ENCODE measurements at regions of chr11 and their contacts with region 1.

Region 1: GRCh38 chr11:45771566-45772448 is 33.1 kb upstream of the SLC35C1 start:
- DNase-seq: peak; percentile 84 to 92
- H3K4me3 ChIP-seq: peak overlapping the region; percentile 38
- H3K4me3 Mint-ChIP-seq: peak overlapping the region; percentile 97
- H3K27ac Mint-ChIP-seq: no peak overlapping the region
- H3K4me1 ChIP-seq: no peaks in the 10 kb centered on the region; the same call in 1 of the 2 replicates
- H3K4me1 Mint-ChIP-seq: peaks cover 12% of the 10 kb centered on the region
- H3K27me3 ChIP-seq: no peaks in the 10 kb centered on the region
- H3K27me3 Mint-ChIP-seq: peaks cover 25% of the 10 kb centered on the region
- CTCF ChIP-seq: peak; percentile 93

Region 2: GRCh38 chr11:45354976-45355705 is 416.7 kb before region 1 on chr11:
- CTCF ChIA-PET with region 1: interaction called, 12 read pairs
- POLR2A ChIA-PET with region 1: no interaction called
- intact Hi-C with region 1: no loop called
- DNase-seq: no peak
- H3K4me3 ChIP-seq: no peak overlapping the region
- H3K4me3 Mint-ChIP-seq: no peak overlapping the region
- H3K27ac Mint-ChIP-seq: no peak overlapping the region
- H3K4me1 ChIP-seq: no peaks in the 10 kb centered on the region
- H3K4me1 Mint-ChIP-seq: no peaks in the 10 kb centered on the region
- H3K27me3 ChIP-seq: no peaks in the 10 kb centered on the region; the same call in 1 of the 2 replicates
- H3K27me3 Mint-ChIP-seq: peaks cover 26% of the 10 kb centered on the region
- CTCF ChIP-seq: no peak

Region 3: GRCh38 chr11:45501392-45502225 is 270.2 kb before region 1 on chr11:
- CTCF ChIA-PET with region 1: no interaction called
- POLR2A ChIA-PET with region 1: no interaction called
- intact Hi-C with region 1: loop called (anchors 2 kb)
- DNase-seq: no peak
- H3K4me3 ChIP-seq: no peak overlapping the region
- H3K4me3 Mint-ChIP-seq: no peak overlapping the region
- H3K27ac Mint-ChIP-seq: no peak overlapping the region
- H3K4me1 ChIP-seq: no peaks in the 10 kb centered on the region
- H3K4me1 Mint-ChIP-seq: no peaks in the 10 kb centered on the region
- H3K27me3 ChIP-seq: no peaks in the 10 kb centered on the region; the same call in 1 of the 2 replicates
- H3K27me3 Mint-ChIP-seq: peaks cover 15% of the 10 kb centered on the region
- CTCF ChIP-seq: no peak

Region 4: DNA sequence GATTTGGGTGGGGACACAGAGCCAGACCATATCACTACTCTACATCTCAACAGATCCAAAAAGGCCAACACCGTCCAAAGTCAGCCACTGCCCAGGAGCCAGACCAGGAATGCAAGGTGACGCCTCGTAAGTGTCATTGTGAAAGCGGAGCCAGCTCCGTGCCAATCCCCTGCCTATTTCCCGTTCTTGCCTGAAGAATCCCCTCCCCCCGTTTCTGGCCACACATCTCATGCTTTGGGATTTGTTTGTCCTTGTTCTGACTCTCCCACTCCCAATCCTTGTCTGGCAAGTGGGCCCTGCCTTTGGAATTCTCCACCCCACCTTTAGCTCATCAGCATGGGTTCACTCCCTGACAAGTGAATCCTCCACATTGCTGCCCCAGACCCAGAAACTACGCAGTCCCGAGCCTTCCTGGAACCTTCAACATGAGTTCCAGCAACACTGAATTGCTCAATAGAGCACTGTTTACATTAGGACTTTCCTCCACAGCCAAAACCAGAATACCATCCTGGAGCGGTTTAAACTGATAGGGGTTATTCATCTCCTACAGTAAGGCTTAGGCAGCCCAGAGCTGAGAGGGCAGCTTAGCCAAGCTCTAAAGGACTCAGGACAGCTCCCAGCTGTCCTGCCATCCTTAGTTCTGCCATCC is 27.1 kb after region 1 on chr11:
- CTCF ChIA-PET with region 1: interaction called, 10 read pairs
- POLR2A ChIA-PET with region 1: no interaction called
- intact Hi-C with region 1: no loop called
- DNase-seq: peak in 1 of 2 experiments; percentile 30
- H3K4me3 ChIP-seq: no peak overlapping the region
- H3K4me3 Mint-ChIP-seq: no peak overlapping the region
- H3K27ac Mint-ChIP-seq: no peak overlapping the region
- H3K4me1 ChIP-seq: 0 out of 2 replicates have a peak, but pooled peaks cover 4% of the 10 kb centered on the region
- H3K4me1 Mint-ChIP-seq: no peaks in the 10 kb centered on the region
- H3K27me3 ChIP-seq: no peaks in the 10 kb centered on the region
- H3K27me3 Mint-ChIP-seq: no peaks in the 10 kb centered on the region
- CTCF ChIP-seq: no peak

Region 5: GRCh38 chr11:45846974-45847910 is 75.4 kb after region 1 on chr11 and contains the start of gene CRY2:
- CTCF ChIA-PET with region 1: interaction called, 10 read pairs
- POLR2A ChIA-PET with region 1: no interaction called
- intact Hi-C with region 1: loop called (anchors 5 kb)
- DNase-seq: peak; percentile 100
- H3K4me3 ChIP-seq: peak within 1 kb of the TSS; percentile 80
- H3K4me3 Mint-ChIP-seq: peak within 1 kb of the TSS; percentile 81
- H3K27ac Mint-ChIP-seq: peak within 1 kb of the TSS; percentile 86
- H3K4me1 ChIP-seq: peaks cover 18% of the 10 kb centered on the region
- H3K4me1 Mint-ChIP-seq: peaks cover 26% of the 10 kb centered on the region
- H3K27me3 ChIP-seq: no peaks in the 10 kb centered on the region
- H3K27me3 Mint-ChIP-seq: no peaks in the 10 kb centered on the region
- CTCF ChIP-seq: no peak
- total RNA-seq, gene CRY2: 28.5 and 31.6 TPM in 2 replicates

Region 6: GRCh38 chr11:45930031-45930794 is 158.4 kb after region 1 on chr11:
- CTCF ChIA-PET with region 1: no interaction called
- POLR2A ChIA-PET with region 1: no interaction called
- intact Hi-C with region 1: no loop called
- DNase-seq: no peak
- H3K4me3 ChIP-seq: no peak overlapping the region
- H3K4me3 Mint-ChIP-seq: no peak overlapping the region
- H3K27ac Mint-ChIP-seq: no peak overlapping the region
- H3K4me1 ChIP-seq: 0 out of 2 replicates have a peak, but pooled peaks cover 4% of the 10 kb centered on the region
- H3K4me1 Mint-ChIP-seq: no peaks in the 10 kb centered on the region
- H3K27me3 ChIP-seq: no peaks in the 10 kb centered on the region
- H3K27me3 Mint-ChIP-seq: no peaks in the 10 kb centered on the region
- CTCF ChIP-seq: no peak